ENCODE measurements at regions of chr11 and their contacts with region 1.

Region 1: GRCh38 chr11:9613118-9613829 is 39.8 kb downstream of the WEE1 start:
- DNase-seq: peak; percentile 88
- H3K4me3 ChIP-seq: peak overlapping the region; percentile 6 to 26 (median 21)
- H3K27ac ChIP-seq: peak overlapping the region; percentile 91
- H3K4me1 ChIP-seq: peaks cover 27% of the 10 kb centered on the region
- H3K27me3 ChIP-seq: no peaks in the 10 kb centered on the region
- CTCF ChIP-seq: peak; percentile 78 to 97

Region 2: DNA sequence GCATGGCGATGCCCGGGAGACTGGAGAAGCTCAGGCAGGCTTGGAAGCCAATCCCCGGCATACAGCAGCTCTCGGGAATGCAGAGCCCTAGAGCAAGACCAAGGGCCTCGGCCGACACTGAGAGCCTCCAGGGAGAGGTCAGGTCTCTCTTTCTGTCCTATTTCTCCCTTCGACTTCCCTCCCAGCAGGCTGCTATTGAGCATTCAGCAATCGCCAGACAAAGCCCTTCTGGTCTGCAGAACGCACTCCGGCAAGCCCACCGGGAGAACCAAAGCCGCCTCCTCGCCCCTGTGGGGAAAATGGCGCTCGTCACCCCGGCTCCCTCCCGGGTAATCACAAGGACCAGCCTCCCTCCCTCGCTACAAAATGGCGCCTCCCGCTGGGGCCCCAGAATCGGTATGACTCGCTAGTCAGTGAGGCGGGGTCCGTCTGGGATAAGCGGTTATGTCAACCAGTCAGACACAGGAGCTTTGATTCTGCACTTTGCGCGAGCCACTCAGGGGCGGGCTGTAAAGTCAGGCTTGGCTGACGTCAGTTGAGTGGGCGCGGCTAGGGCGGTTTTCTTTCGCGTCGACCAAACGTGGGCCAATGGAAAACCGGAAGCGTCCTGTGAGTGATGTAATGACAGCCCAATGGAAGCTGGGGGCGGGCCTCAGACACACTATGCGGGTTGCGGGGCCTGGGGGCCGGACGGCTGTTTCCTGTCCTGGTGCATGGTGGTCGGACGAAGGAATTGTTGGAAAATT is 152.8 kb before region 1 on chr11 and contains the start of gene ZNF143:
- CTCF ChIA-PET with region 1: interaction called, 3 read pairs
- dilution Hi-C with region 1: no loop called
- in situ Hi-C with region 1: no loop called
- intact Hi-C with region 1: loop called (anchors 5 kb)
- DNase-seq: peak; percentile 100
- H3K4me3 ChIP-seq: peak within 1 kb of the TSS; percentile 65 to 88 (median 82)
- H3K27ac ChIP-seq: peak within 1 kb of the TSS; percentile 98
- H3K4me1 ChIP-seq: peaks cover 19% of the 10 kb centered on the region
- H3K27me3 ChIP-seq: no peaks in the 10 kb centered on the region
- CTCF ChIP-seq: no peak
- total RNA-seq, gene ZNF143: 19.5 to 22.7 TPM

Region 3: DNA sequence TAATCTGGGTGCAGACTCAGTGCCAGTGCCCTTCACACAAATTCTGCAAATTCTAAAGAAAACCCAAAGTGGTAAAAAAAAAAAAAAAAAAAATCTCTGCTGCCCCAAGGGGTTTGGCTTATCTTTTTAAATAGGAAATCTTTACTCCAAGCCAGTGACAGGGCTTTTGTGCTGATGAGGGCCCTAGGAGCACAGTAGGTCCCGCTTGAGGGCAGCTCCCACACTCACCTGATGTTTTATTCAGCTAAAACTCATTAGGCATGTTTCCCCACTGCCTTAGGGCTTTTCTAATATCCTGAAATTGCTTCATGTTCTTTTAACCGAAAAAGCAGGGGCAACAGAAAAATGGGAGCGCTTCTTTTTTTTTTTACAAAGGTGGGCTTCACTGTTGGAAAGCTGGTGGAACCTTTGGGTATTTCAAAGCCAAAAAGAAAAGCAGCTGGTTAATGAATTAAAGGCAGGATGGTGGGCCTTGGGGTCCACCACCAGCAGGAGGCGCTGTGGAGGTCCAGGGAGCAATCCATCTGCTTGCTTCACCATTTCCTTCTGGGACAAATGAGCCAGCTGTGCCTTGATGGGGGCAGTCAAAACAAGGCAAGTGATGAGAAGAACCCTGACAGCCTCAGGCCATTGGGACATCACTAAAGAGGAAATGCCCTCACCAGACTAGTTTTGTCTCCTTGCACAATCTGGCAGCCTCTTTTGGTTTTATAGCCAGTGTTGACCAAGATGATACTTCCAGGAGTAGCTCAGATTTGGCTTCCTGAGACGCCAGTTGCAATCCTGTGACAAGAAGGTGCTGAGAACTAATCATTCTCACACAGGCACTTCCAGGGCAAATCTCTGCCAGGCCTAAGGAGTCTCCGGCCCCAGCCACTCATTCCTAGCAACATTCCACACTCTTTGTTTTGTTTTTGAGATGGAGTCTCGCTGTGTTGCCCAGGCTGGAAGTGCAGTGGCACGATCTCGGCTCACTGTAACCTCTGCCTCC is 78.2 kb before region 1 on chr11:
- CTCF ChIA-PET with region 1: interaction called, 10 read pairs
- dilution Hi-C with region 1: no loop called
- in situ Hi-C with region 1: no loop called
- intact Hi-C with region 1: no loop called
- DNase-seq: peak; percentile 78
- H3K4me3 ChIP-seq: no peak overlapping the region
- H3K27ac ChIP-seq: no peak overlapping the region
- H3K4me1 ChIP-seq: peaks cover 6% of the 10 kb centered on the region
- H3K27me3 ChIP-seq: no peaks in the 10 kb centered on the region
- CTCF ChIP-seq: peak; percentile 86 to 89

Region 4: GRCh38 chr11:9575260-9576240 is 37.7 kb before region 1 on chr11:
- CTCF ChIA-PET with region 1: interaction called, 5 read pairs
- dilution Hi-C with region 1: no loop called
- in situ Hi-C with region 1: no loop called
- intact Hi-C with region 1: loop called (anchors 1 kb)
- DNase-seq: peak; percentile 86
- H3K4me3 ChIP-seq: peak overlapping the region; percentile 87 to 97 (median 89)
- H3K27ac ChIP-seq: peak overlapping the region; percentile 96
- H3K4me1 ChIP-seq: peaks cover 17% of the 10 kb centered on the region
- H3K27me3 ChIP-seq: no peaks in the 10 kb centered on the region
- CTCF ChIP-seq: no peak

Region 5: GRCh38 chr11:9663699-9664275 is 50.5 kb after region 1 on chr11 and contains the start of gene SWAP70:
- CTCF ChIA-PET with region 1: no interaction called
- dilution Hi-C with region 1: no loop called
- in situ Hi-C with region 1: no loop called
- intact Hi-C with region 1: loop called (anchors 2 kb)
- DNase-seq: peak; percentile 81
- H3K4me3 ChIP-seq: peak within 1 kb of the TSS; percentile 72 to 95 (median 92)
- H3K27ac ChIP-seq: peak within 1 kb of the TSS; percentile 87
- H3K4me1 ChIP-seq: peaks cover 7% of the 10 kb centered on the region
- H3K27me3 ChIP-seq: no peaks in the 10 kb centered on the region
- CTCF ChIP-seq: peak in 1 of 2 donors; percentile 67
- total RNA-seq, gene SWAP70: 40.4 to 51.2 TPM

Region 6: DNA sequence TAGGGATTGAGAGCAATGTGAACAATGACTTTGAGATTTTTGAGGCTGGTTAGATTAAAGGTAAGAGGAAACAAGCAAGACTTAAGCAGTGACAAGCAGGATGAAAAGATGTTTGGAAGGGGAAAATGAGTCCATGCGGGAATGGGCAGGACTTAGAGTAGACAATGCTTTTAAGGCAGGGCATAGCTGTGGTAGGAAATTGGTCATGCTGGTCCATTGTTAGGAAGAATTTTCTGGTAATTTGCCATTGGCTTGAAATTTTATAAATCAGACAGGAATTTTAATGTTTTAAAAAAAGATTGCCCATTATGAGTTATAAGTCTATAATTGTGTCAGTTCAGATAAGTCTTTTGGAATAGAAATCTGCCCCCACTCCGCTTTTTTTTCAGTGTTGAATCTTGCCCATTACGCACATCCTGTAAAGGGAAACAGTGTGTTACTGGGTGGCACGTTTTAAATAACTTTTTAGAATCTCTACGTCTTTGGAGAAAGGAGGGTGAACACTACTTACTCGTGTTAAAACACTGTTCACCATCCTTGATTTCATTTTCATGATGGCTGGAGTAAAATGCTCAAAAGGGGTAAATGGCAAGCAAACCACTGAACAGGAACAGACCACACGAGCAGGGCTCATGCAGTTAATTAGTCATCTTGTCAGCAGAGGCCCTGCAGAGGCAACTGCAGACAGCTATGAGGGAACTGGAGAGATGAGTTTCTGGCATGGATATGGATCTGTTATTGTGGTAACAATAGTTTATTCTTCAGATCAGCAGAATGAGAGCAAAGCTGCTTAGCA is 75.6 kb after region 1 on chr11:
- CTCF ChIA-PET with region 1: no interaction called
- dilution Hi-C with region 1: no loop called
- in situ Hi-C with region 1: no loop called
- intact Hi-C with region 1: no loop called
- DNase-seq: peak; percentile 80
- H3K4me3 ChIP-seq: no peak overlapping the region
- H3K27ac ChIP-seq: peak overlapping the region; percentile 53
- H3K4me1 ChIP-seq: peaks cover 57% of the 10 kb centered on the region
- H3K27me3 ChIP-seq: no peaks in the 10 kb centered on the region
- CTCF ChIP-seq: no peak

Region 7: DNA sequence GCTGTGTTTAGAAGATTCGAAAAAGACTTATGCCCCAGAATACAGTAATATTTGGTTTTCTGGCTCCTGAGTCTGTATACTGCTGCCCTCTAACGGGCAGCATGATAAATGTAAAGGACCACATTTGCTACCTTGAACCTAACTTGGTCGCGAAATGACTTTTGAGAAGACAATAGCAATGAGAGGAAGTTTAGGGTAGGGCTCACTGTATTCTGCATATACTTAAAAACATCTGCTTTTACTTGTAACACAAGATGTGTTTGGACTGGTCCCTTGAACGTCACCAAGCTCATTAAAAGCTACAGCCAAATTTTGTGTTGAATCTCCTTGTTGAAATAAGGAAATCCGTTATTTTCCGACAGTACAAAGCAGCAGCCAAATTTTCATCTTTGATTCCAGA is 359.7 kb after region 1 on chr11:
- CTCF ChIA-PET with region 1: no interaction called
- dilution Hi-C with region 1: no loop called
- in situ Hi-C with region 1: no loop called
- intact Hi-C with region 1: loop called (anchors 1 kb)
- DNase-seq: peak; percentile 39
- H3K4me3 ChIP-seq: no peak overlapping the region
- H3K27ac ChIP-seq: no peak overlapping the region
- H3K4me1 ChIP-seq: no peaks in the 10 kb centered on the region
- H3K27me3 ChIP-seq: no peaks in the 10 kb centered on the region
- CTCF ChIP-seq: peak; percentile 75 to 83